ENCODE measurements at regions of chr11 and their contacts with region 1.

Region 1: GRCh38 chr11:65418711-65419459 is 3.7 kb upstream of the NEAT1 start:
- DNase-seq: peak; percentile 90
- ATAC-seq: peak; percentile 66
- H3K4me3 Mint-ChIP-seq: peak overlapping the region; percentile 3
- H3K27ac Mint-ChIP-seq: peak overlapping the region; percentile 100
- H3K4me1 Mint-ChIP-seq: peaks cover 76% of the 10 kb centered on the region
- H3K27me3 Mint-ChIP-seq: 0 out of 2 replicates have a peak, but pooled peaks cover 2% of the 10 kb centered on the region
- CTCF ChIP-seq: no peak

Region 2: GRCh38 chr11:65378221-65378907 is 40.5 kb before region 1 on chr11:
- CTCF ChIA-PET with region 1: interaction called, 15 read pairs
- POLR2A ChIA-PET with region 1: no interaction called
- DNase-seq: no peak
- ATAC-seq: no peak
- H3K4me3 Mint-ChIP-seq: no peak overlapping the region
- H3K27ac Mint-ChIP-seq: no peak overlapping the region
- H3K4me1 Mint-ChIP-seq: peaks cover 15% of the 10 kb centered on the region
- H3K27me3 Mint-ChIP-seq: no peaks in the 10 kb centered on the region; the same call in 1 of the 2 replicates
- CTCF ChIP-seq: no peak

Region 3: GRCh38 chr11:65398362-65398910 is 20.4 kb before region 1 on chr11:
- CTCF ChIA-PET with region 1: interaction called, 10 read pairs
- POLR2A ChIA-PET with region 1: interaction called, 7 read pairs
- DNase-seq: no peak
- ATAC-seq: no peak
- H3K4me3 Mint-ChIP-seq: no peak overlapping the region
- H3K27ac Mint-ChIP-seq: no peak overlapping the region; the same call in 1 of the 2 replicates
- H3K4me1 Mint-ChIP-seq: peaks cover 10% of the 10 kb centered on the region
- H3K27me3 Mint-ChIP-seq: no peaks in the 10 kb centered on the region
- CTCF ChIP-seq: no peak

Region 4: GRCh38 chr11:65471410-65471762 is 52.5 kb after region 1 on chr11:
- CTCF ChIA-PET with region 1: interaction called, 224 read pairs
- POLR2A ChIA-PET with region 1: interaction called, 37 read pairs
- DNase-seq: peak; percentile 69
- ATAC-seq: peak; percentile 87
- H3K4me3 Mint-ChIP-seq: no peak overlapping the region
- H3K27ac Mint-ChIP-seq: no peak overlapping the region
- H3K4me1 Mint-ChIP-seq: peaks cover 2% of the 10 kb centered on the region
- H3K27me3 Mint-ChIP-seq: peaks cover 11% of the 10 kb centered on the region
- CTCF ChIP-seq: 0 out of 2 replicates have a peak, but pooled peaks have one; percentile 16

Region 5: GRCh38 chr11:65487413-65488272 is 68.8 kb after region 1 on chr11:
- CTCF ChIA-PET with region 1: interaction called, 31 read pairs
- POLR2A ChIA-PET with region 1: interaction called, 38 read pairs
- DNase-seq: peak; percentile 96
- ATAC-seq: peak; percentile 86
- H3K4me3 Mint-ChIP-seq: peak overlapping the region; percentile 62
- H3K27ac Mint-ChIP-seq: peak overlapping the region; percentile 100
- H3K4me1 Mint-ChIP-seq: peaks cover 82% of the 10 kb centered on the region
- H3K27me3 Mint-ChIP-seq: peaks cover 4% of the 10 kb centered on the region
- CTCF ChIP-seq: no peak

Region 6: DNA sequence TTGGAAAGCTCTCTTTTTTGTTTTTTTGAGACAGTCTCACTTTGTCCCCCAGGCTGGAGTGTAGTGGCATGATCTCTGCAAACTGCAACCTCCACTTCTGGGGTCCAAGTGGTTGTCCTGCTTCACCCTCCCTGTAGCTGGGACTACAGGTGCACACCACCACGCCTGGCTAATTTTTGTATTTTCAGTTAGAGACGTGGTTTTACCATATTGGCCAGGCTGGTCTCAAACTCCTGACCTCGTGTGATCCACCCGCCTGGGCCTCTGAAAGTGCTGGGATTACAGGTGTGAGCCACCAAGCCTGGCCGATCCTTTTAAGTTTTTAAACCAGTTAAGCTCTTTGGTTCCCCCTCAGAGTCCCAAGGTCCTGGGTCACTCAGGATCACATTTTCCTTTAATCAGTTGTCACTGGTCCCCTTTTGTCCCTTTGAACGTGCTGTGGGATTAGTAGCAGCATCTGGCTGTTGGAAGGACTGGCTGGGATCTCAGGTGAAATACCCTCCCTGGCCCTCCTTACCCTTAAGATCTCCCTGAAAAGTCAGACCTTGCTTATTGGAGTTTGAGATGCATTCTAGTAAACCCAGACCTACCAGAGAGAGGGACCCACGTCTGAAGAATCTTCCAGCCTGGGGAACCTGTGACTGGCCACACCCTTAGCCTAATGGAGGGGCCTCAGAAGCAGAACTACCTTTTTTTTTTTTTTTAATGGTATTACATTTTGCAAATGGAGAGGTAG is 88.1 kb after region 1 on chr11:
- CTCF ChIA-PET with region 1: interaction called, 40 read pairs
- POLR2A ChIA-PET with region 1: interaction called, 175 read pairs
- DNase-seq: no peak
- ATAC-seq: peak; percentile 49
- H3K4me3 Mint-ChIP-seq: no peak overlapping the region
- H3K27ac Mint-ChIP-seq: peak overlapping the region; percentile 92
- H3K4me1 Mint-ChIP-seq: peaks cover 55% of the 10 kb centered on the region
- H3K27me3 Mint-ChIP-seq: no peaks in the 10 kb centered on the region
- CTCF ChIP-seq: no peak

Region 7: GRCh38 chr11:66056501-66056900 is 637.6 kb after region 1 on chr11:
- CTCF ChIA-PET with region 1: no interaction called
- POLR2A ChIA-PET with region 1: no interaction called
- DNase-seq: no peak
- ATAC-seq: no peak
- H3K4me3 Mint-ChIP-seq: no peak overlapping the region
- H3K27ac Mint-ChIP-seq: no peak overlapping the region
- H3K4me1 Mint-ChIP-seq: peaks cover 9% of the 10 kb centered on the region
- H3K27me3 Mint-ChIP-seq: no peaks in the 10 kb centered on the region
- CTCF ChIP-seq: no peak

Measured in WTC11 (cell line).